Adrenal gland (tissue), 19 donors: ENCODE measurements at regions of chr1 and their contacts with region 1.

Region 1: DNA sequence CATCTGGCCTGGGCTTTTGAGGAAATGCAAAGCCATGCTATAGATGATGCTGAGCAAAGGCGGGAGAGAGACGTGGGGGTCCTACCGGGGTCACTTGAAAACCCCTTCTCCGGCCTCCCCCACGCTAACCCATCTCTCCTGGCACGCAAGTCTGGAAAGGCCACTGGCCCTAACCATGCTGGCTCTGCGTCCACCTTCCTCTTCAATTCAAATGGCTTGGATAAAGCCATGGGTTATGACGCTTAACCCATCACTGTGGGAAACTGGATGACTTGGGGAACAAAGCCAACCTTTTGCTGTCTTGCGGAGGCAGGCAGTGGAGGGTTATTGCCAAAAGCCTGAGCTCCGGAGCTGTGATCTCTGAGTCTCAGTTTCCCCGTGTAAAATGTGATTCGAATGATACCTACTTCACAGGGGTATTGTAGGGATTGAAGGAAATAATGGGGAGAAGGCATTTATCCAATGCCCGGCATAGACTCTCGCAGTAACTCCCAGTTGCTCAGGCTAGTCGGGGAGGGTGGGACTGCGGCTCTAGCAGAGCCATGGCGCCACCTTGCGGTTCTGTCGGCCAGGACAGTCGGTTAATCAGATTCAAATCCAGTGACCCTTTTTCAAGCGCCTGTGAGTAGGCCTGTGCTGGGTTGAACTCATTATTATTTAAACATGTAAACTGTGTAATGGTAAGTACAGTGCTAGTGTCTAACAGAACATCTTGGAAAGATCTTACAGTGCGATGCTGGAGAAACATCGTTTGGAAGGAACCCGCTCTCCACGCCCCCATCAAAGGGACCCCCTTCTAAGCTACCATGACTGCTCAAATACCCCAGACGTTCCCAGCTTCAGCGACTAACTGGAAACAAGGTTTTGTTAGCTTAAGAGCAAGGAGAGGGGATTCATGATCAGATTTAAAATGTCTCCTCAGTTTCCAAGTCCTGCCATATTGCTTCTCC is 20.3 kb downstream of the NEK2 start:
- DNase-seq: peak; percentile 85 to 96 (median 93)
- H3K4me3 ChIP-seq: peak overlapping the region in 1 of 4 donors; percentile 35
- H3K27ac ChIP-seq: no peak overlapping the region
- H3K4me1 ChIP-seq: no peaks in the 10 kb centered on the region
- H3K27me3 ChIP-seq: no peaks in the 10 kb centered on the region
- CTCF ChIP-seq: peak; percentile 89 to 97 (median 92)
- POLR2A ChIP-seq: no peak

Region 2: GRCh38 chr1:211578640-211579433 is 76.3 kb before region 1 on chr1 and contains the start of gene SLC30A1:
- intact Hi-C with region 1: loop called (anchors 2 to 5 kb)
- DNase-seq: peak; percentile 100
- H3K4me3 ChIP-seq: peak within 1 kb of the TSS; percentile 97 to 98 (median 97)
- H3K27ac ChIP-seq: peak within 1 kb of the TSS; percentile 71 to 95 (median 94)
- H3K4me1 ChIP-seq: peaks cover 32 to 47% of the 10 kb centered on the region in 2 donors
- H3K27me3 ChIP-seq: no peaks in the 10 kb centered on the region
- CTCF ChIP-seq: no peak
- POLR2A ChIP-seq: peak; percentile 86 to 97
- total RNA-seq, gene SLC30A1: 22.1 to 82.6 (median 41.9) TPM

Region 3: GRCh38 chr1:211813590-211813989 is 158.5 kb after region 1 on chr1:
- intact Hi-C with region 1: no loop called
- DNase-seq: peak; percentile 41 to 88 (median 71)
- H3K4me3 ChIP-seq: no peak overlapping the region
- H3K27ac ChIP-seq: peak overlapping the region in 2 of 5 donors; percentile 1 to 4
- H3K4me1 ChIP-seq: peaks cover 14 to 17% of the 10 kb centered on the region in 2 donors
- H3K27me3 ChIP-seq: no peaks in the 10 kb centered on the region
- CTCF ChIP-seq: no peak
- POLR2A ChIP-seq: no peak